ENCODE measurements at regions of chr2 and their contacts with region 1.

Region 1: GRCh38 chr2:98444436-98445176 is at the start of gene INPP4A:
- DNase-seq: peak; percentile 78
- H3K4me3 ChIP-seq: peak within 1 kb of the TSS; percentile 76
- H3K27ac ChIP-seq: peak within 1 kb of the TSS; percentile 58
- H3K4me1 ChIP-seq: peaks cover 9% of the 10 kb centered on the region
- H3K27me3 ChIP-seq: no peaks in the 10 kb centered on the region
- CTCF ChIP-seq: no peak
- total RNA-seq, gene INPP4A: 33.5 and 39.9 TPM in 2 replicates

Region 2: GRCh38 chr2:98465456-98466226 is 21.0 kb after region 1 on chr2:
- CTCF ChIA-PET with region 1: no interaction called
- POLR2A ChIA-PET with region 1: no interaction called
- intact Hi-C with region 1: loop called (anchors 2 kb)
- DNase-seq: peak; percentile 88
- H3K4me3 ChIP-seq: no peak overlapping the region
- H3K27ac ChIP-seq: peak overlapping the region; percentile 56
- H3K4me1 ChIP-seq: peaks cover 32% of the 10 kb centered on the region
- H3K27me3 ChIP-seq: no peaks in the 10 kb centered on the region
- CTCF ChIP-seq: no peak